Panc1 (cell line): ENCODE measurements at regions of chr2 and their contacts with region 1.

Region 1: DNA sequence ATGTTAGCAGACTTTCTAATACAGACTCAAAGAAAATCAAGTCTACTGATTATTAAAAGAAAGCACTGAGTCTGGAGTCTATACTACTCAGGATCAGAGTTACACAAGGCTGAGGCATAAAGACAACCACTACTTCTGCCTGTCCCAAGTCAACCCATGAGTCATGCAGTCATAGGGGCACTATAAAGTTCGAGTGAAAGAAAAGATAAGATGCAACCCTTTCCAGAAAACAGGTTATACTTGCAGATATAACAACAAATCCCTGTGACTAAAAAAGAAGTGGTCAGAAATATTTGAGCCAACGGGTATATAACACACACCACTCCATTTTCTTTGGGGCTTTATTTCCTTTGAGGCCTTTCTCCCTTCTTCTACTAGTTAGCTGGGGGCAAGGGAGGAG is 18.6 kb upstream of the SCRN3 start:
- DNase-seq: no peak
- ATAC-seq: no peak
- H3K4me3 ChIP-seq: no peak overlapping the region
- H3K27ac ChIP-seq: no peak overlapping the region
- H3K4me1 ChIP-seq: no peaks in the 10 kb centered on the region
- H3K27me3 ChIP-seq: no peaks in the 10 kb centered on the region
- CTCF ChIP-seq: no peak

Region 2: DNA sequence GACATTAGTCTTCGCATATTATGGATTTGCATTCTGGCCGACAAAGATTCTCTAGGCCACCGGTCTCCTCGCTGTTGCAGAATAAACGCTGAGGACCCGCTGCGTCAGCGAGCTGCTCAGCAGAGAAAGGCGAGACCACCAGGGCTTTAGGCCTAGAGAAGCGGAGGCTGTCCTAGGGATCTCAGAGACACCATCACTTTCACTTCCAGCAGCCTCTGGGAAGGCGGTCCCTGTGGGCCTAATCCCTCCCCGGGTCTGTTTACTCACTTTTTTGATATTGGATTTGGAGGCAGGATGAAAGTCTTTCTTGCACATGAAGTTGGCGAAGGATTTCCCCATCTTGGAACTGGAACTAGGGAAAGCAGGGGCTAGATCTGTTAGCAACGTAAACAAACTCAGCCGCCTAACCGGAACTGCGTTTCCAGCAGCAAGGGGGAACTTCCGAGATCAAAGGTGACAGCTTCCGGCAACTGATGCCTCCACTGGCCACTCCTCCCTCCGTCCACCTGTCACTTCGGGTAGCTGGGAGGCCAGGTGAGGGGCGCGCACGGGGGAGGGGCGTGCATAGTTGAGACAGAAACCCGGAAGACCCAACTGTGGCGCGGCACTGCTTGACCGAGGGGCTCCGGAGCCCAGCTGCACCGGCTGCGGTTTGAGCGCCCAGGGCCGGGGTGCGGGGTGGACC is 18.5 kb after region 1 on chr2 and contains the start of gene SCRN3:
- CTCF ChIA-PET with region 1: no interaction called
- POLR2A ChIA-PET with region 1: interaction called, 16 read pairs
- in situ Hi-C with region 1: no loop called
- intact Hi-C with region 1: no loop called
- DNase-seq: peak; percentile 59
- ATAC-seq: peak; percentile 99
- H3K4me3 ChIP-seq: peak within 1 kb of the TSS; percentile 91 to 100
- H3K27ac ChIP-seq: peak within 1 kb of the TSS; percentile 95
- H3K4me1 ChIP-seq: peaks cover 13% of the 10 kb centered on the region
- H3K27me3 ChIP-seq: no peaks in the 10 kb centered on the region
- CTCF ChIP-seq: no peak
- total RNA-seq, gene SCRN3: 16.2 TPM

Region 3: GRCh38 chr2:174663550-174663949 is 286.6 kb after region 1 on chr2:
- CTCF ChIA-PET with region 1: no interaction called
- POLR2A ChIA-PET with region 1: no interaction called
- in situ Hi-C with region 1: no loop called
- intact Hi-C with region 1: no loop called
- DNase-seq: no peak
- ATAC-seq: no peak
- H3K4me3 ChIP-seq: no peak overlapping the region
- H3K27ac ChIP-seq: no peak overlapping the region
- H3K4me1 ChIP-seq: no peaks in the 10 kb centered on the region; the same call in 1 of the 2 replicates
- H3K27me3 ChIP-seq: no peaks in the 10 kb centered on the region
- CTCF ChIP-seq: no peak